ENCODE measurements at regions of chr10 and their contacts with region 1.

Region 1: GRCh38 chr10:50512743-50513416 is 110.9 kb downstream of the SGMS1 start:
- DNase-seq: no peak
- H3K4me3 Mint-ChIP-seq: no peak overlapping the region
- H3K27ac Mint-ChIP-seq: no peak overlapping the region
- H3K4me1 Mint-ChIP-seq: peaks cover 20% of the 10 kb centered on the region
- H3K27me3 Mint-ChIP-seq: no peaks in the 10 kb centered on the region
- CTCF ChIP-seq: no peak

Region 2: DNA sequence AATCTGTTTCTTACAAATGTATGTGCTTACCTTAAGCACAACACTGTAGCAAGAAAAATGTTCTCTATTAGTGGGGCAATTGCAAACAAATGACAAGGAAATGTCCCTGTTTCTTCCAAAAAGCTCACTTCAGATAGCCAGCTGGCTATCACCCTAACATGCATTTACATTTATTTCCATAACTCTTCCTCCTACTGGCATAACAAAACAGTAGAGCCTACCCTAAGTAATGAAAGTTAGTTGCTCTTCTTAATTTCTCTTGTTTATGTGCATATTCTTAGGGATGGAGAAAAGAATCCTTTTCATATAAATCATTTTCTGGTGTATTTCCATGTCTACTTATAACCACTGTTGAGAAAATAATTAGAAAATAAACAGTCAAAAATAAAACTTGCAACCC is 10.5 kb after region 1 on chr10:
- CTCF ChIA-PET with region 1: interaction called, 12 read pairs
- POLR2A ChIA-PET with region 1: interaction called, 3 read pairs
- intact Hi-C with region 1: no loop called
- DNase-seq: no peak
- H3K4me3 Mint-ChIP-seq: no peak overlapping the region
- H3K27ac Mint-ChIP-seq: no peak overlapping the region
- H3K4me1 Mint-ChIP-seq: no peaks in the 10 kb centered on the region
- H3K27me3 Mint-ChIP-seq: no peaks in the 10 kb centered on the region
- CTCF ChIP-seq: no peak

Measured in MCF 10A (cell line).